Activated T-helper 1 cell treated with anti-CD3 and anti-CD28 coated beads, Interleukin-12 subunit alpha, Interleukin-12 subunit beta, Interleukin-2, Interleukin-4 antibody, amounts not matched to agents 30 ng/mL and 10 ng/mL and 1 ng/mL, durations not matched to agents 14 hours and 24 hours and 36 hours (primary cell): ENCODE measurements at regions of chr5 and their contacts with region 1.

Region 1: GRCh38 chr5:6827526-6828219 is 114.4 kb downstream of the TENT4A start:
- DNase-seq: peak; percentile 46
- H3K4me3 Mint-ChIP-seq: peak overlapping the region; percentile 76
- H3K27ac Mint-ChIP-seq: peak overlapping the region; percentile 84
- H3K4me1 Mint-ChIP-seq: peaks cover 56% of the 10 kb centered on the region
- H3K27me3 Mint-ChIP-seq: peaks cover 5% of the 10 kb centered on the region

Region 2: DNA sequence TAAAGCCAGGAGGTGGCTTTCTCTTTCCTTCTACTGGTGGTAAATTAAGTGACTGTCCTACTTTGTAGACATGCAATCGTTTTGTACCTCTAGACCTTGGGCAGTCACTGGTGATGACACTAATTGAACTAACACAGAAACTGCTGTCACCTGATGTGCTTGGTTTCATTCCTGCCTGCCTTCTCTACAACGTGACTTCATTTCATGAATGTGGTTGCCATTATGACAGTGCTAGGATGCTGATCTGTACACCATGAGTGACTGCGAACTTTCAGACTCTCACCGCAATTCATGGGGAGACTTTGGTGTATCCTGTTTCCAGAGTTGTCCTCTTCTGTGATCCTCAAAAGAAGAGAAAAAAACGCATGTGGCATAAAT is 331.5 kb before region 1 on chr5:
- intact Hi-C with region 1: loop called (anchors 1 kb)
- DNase-seq: peak; percentile 13
- H3K4me3 Mint-ChIP-seq: no peak overlapping the region
- H3K27ac Mint-ChIP-seq: peak overlapping the region; percentile 8
- H3K4me1 Mint-ChIP-seq: peaks cover 43% of the 10 kb centered on the region
- H3K27me3 Mint-ChIP-seq: peaks cover 3% of the 10 kb centered on the region

Region 3: GRCh38 chr5:6737023-6737941 is 90.4 kb before region 1 on chr5:
- intact Hi-C with region 1: loop called (anchors 5 kb)
- DNase-seq: no peak
- H3K4me3 Mint-ChIP-seq: peak overlapping the region; percentile 61
- H3K27ac Mint-ChIP-seq: peak overlapping the region; percentile 94
- H3K4me1 Mint-ChIP-seq: peaks cover 61% of the 10 kb centered on the region
- H3K27me3 Mint-ChIP-seq: no peaks in the 10 kb centered on the region

Region 4: DNA sequence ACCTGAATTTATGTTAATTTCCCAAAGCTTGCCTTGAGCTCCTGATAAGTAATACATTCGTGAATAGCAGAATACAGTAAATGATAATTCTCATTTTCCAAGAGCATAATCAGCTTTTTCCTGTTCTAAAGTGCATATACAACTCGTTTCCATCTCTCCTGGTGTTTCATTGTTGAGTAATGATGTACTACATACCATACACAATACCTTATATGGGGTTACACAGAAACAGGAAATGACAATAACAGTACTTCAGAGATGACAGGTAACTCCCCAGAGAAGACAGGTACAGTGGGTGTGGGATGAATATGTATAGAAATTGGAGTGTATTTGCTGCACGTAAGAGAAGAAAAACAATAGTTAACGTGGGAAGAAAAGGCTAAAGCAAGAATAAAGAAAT is 172.6 kb after region 1 on chr5:
- intact Hi-C with region 1: loop called (anchors 5 kb)
- DNase-seq: no peak
- H3K4me3 Mint-ChIP-seq: no peak overlapping the region
- H3K27ac Mint-ChIP-seq: no peak overlapping the region
- H3K4me1 Mint-ChIP-seq: peaks cover 5% of the 10 kb centered on the region
- H3K27me3 Mint-ChIP-seq: no peaks in the 10 kb centered on the region

Region 5: DNA sequence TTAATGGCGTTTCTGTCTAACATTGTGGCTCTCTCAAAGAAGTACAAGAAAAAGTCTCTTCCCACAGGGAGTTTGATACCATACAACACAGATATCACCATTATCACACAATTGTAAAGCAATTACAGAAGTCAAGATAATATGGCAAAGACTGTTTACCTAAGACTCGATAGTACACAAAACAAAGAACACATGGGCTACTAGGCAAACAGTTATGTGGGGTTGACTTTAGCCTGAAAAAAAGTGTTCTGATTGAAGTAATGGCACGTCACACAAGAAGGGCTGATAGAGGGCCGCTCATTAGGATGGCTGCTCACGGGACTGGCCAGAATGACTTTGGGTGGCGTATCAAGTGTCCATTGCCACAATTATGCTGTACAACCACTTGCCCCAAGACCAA is 630.9 kb after region 1 on chr5:
- intact Hi-C with region 1: no loop called
- DNase-seq: no peak
- H3K4me3 Mint-ChIP-seq: no peak overlapping the region
- H3K27ac Mint-ChIP-seq: no peak overlapping the region
- H3K4me1 Mint-ChIP-seq: no peaks in the 10 kb centered on the region
- H3K27me3 Mint-ChIP-seq: no peaks in the 10 kb centered on the region

Region 6: GRCh38 chr5:7894860-7895259 is 1067.2 kb after region 1 on chr5:
- intact Hi-C with region 1: loop called (anchors 2 kb)
- DNase-seq: no peak
- H3K4me3 Mint-ChIP-seq: no peak overlapping the region
- H3K27ac Mint-ChIP-seq: no peak overlapping the region
- H3K4me1 Mint-ChIP-seq: peaks cover 22% of the 10 kb centered on the region
- H3K27me3 Mint-ChIP-seq: no peaks in the 10 kb centered on the region

Region 7: GRCh38 chr5:8184455-8185063 is 1356.9 kb after region 1 on chr5:
- intact Hi-C with region 1: no loop called
- DNase-seq: no peak
- H3K4me3 Mint-ChIP-seq: no peak overlapping the region
- H3K27ac Mint-ChIP-seq: no peak overlapping the region
- H3K4me1 Mint-ChIP-seq: no peaks in the 10 kb centered on the region
- H3K27me3 Mint-ChIP-seq: no peaks in the 10 kb centered on the region